ENCODE measurements at regions of chr2 and their contacts with region 1.

Region 1: DNA sequence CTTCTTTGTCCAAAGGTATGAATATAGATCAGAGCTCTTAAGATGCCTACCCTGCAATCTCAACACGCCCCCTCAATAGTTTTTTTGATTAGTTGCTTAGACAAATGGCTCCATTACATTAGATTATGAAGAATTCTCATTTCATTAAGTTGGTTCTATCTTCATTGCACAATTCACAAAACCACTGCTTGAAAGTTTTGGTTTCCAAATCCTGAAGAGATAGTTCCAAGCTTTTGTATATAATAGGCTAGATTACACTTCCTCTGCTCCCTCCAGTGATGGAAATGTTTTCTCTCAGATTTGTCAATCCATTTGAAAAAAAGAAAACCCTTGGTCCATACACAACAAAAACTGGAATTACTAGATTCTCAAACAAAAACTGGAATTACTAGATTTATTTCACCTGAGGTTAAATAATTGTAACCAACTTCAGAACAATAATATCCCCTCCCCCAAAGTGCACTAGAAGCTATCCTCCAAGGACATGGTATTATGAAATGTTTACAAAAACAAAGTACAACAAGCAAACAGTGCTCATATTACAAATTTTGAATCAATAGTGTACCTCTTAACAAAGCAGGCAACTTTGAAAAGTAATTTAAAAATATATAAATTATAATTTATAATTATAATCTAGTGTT is 6.8 kb upstream of the TLK1 start:
- DNase-seq: no peak
- H3K4me3 ChIP-seq: no peak overlapping the region
- H3K4me3 Mint-ChIP-seq: peak overlapping the region; percentile 49
- H3K27ac Mint-ChIP-seq: peak overlapping the region; percentile 87
- H3K4me1 ChIP-seq: peaks cover 25% of the 10 kb centered on the region
- H3K4me1 Mint-ChIP-seq: peaks cover 34% of the 10 kb centered on the region
- H3K27me3 ChIP-seq: no peaks in the 10 kb centered on the region
- H3K27me3 Mint-ChIP-seq: no peaks in the 10 kb centered on the region
- CTCF ChIP-seq: no peak

Region 2: GRCh38 chr2:171185941-171186340 is 18.5 kb after region 1 on chr2:
- CTCF ChIA-PET with region 1: no interaction called
- POLR2A ChIA-PET with region 1: no interaction called
- intact Hi-C with region 1: loop called (anchors 2 kb)
- DNase-seq: no peak
- H3K4me3 ChIP-seq: no peak overlapping the region
- H3K4me3 Mint-ChIP-seq: no peak overlapping the region
- H3K27ac Mint-ChIP-seq: no peak overlapping the region
- H3K4me1 ChIP-seq: peaks cover 20% of the 10 kb centered on the region
- H3K4me1 Mint-ChIP-seq: peaks cover 20% of the 10 kb centered on the region
- H3K27me3 ChIP-seq: no peaks in the 10 kb centered on the region
- H3K27me3 Mint-ChIP-seq: no peaks in the 10 kb centered on the region
- CTCF ChIP-seq: no peak

Region 3: GRCh38 chr2:171271971-171272436 is 104.5 kb after region 1 on chr2:
- CTCF ChIA-PET with region 1: no interaction called
- POLR2A ChIA-PET with region 1: no interaction called
- intact Hi-C with region 1: loop called (anchors 2 kb)
- DNase-seq: peak; percentile 65 to 70
- H3K4me3 ChIP-seq: no peak overlapping the region
- H3K4me3 Mint-ChIP-seq: no peak overlapping the region
- H3K27ac Mint-ChIP-seq: peak overlapping the region; percentile 54
- H3K4me1 ChIP-seq: peaks cover 15% of the 10 kb centered on the region
- H3K4me1 Mint-ChIP-seq: peaks cover 10% of the 10 kb centered on the region
- H3K27me3 ChIP-seq: no peaks in the 10 kb centered on the region
- H3K27me3 Mint-ChIP-seq: no peaks in the 10 kb centered on the region
- CTCF ChIP-seq: no peak